Naive thymus-derived CD4-positive, alpha-beta T cell (primary cell): ENCODE measurements at regions of chr3 and their contacts with region 1.

Region 1: DNA sequence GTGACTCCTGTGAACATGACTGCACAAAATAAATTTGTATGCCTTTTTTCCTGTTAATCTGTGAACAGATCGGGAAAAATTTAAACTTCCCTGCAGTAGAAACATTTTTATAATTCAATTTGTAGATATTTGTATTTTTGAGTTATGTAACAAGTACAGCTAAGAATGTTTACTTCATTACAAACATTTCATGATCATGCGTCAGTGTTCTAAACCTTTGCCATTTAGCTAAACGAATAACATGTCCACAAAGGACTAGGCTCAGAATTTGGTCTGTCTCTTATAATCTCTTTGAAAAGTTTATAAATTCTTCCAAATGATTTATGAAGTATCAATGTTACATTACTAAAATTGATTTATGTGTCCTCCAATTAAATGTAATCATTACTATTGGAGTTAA is 17.3 kb upstream of the CRYBG3 start:
- DNase-seq: no peak
- ATAC-seq: no peak
- H3K4me3 ChIP-seq: no peak overlapping the region
- H3K4me3 Mint-ChIP-seq: no peak overlapping the region
- H3K27ac ChIP-seq: no peak overlapping the region
- H3K27ac Mint-ChIP-seq: no peak overlapping the region
- H3K4me1 ChIP-seq: no peaks in the 10 kb centered on the region
- H3K4me1 Mint-ChIP-seq: peaks cover 0 to 2% (median 0%) of the 10 kb centered on the region in 7 donors
- H3K27me3 ChIP-seq: no peaks in the 10 kb centered on the region
- H3K27me3 Mint-ChIP-seq: peaks cover 0 to 21% (median 9%) of the 10 kb centered on the region in 5 donors

Region 2: GRCh38 chr3:97793420-97794019 is 11.0 kb before region 1 on chr3:
- CTCF ChIA-PET with region 1: no interaction called
- POLR2A ChIA-PET with region 1: no interaction called
- intact Hi-C with region 1: no loop called
- DNase-seq: peak in 7 of 9 donors; percentile 30 to 67 (median 61)
- ATAC-seq: peak; percentile 80
- H3K4me3 ChIP-seq: no peak overlapping the region
- H3K4me3 Mint-ChIP-seq: no peak overlapping the region
- H3K27ac ChIP-seq: no peak overlapping the region
- H3K27ac Mint-ChIP-seq: no peak overlapping the region
- H3K4me1 ChIP-seq: no peaks in the 10 kb centered on the region
- H3K4me1 Mint-ChIP-seq: peaks cover 0 to 3% (median 0%) of the 10 kb centered on the region in 7 donors
- H3K27me3 ChIP-seq: no peaks in the 10 kb centered on the region
- H3K27me3 Mint-ChIP-seq: no peaks in the 10 kb centered on the region

Region 3: GRCh38 chr3:97815149-97815917 is 10.9 kb after region 1 on chr3:
- CTCF ChIA-PET with region 1: no interaction called
- POLR2A ChIA-PET with region 1: no interaction called
- intact Hi-C with region 1: loop called in 1 of 2 experiments (anchors 1 kb)
- DNase-seq: peak in 2 of 9 donors; percentile 11 to 37
- ATAC-seq: peak; percentile 26
- H3K4me3 ChIP-seq: no peak overlapping the region
- H3K4me3 Mint-ChIP-seq: no peak overlapping the region
- H3K27ac ChIP-seq: no peak overlapping the region
- H3K27ac Mint-ChIP-seq: peak overlapping the region in 1 of 9 donors; percentile 6
- H3K4me1 ChIP-seq: no peaks in the 10 kb centered on the region
- H3K4me1 Mint-ChIP-seq: peaks cover 0 to 17% (median 0%) of the 10 kb centered on the region in 7 donors
- H3K27me3 ChIP-seq: peaks cover 0 to 3% of the 10 kb centered on the region in 2 donors
- H3K27me3 Mint-ChIP-seq: peaks cover 0 to 18% (median 6%) of the 10 kb centered on the region in 5 donors